Sigmoid colon (tissue), 7 donors: ENCODE measurements at regions of chr6 and their contacts with region 1.

Region 1: DNA sequence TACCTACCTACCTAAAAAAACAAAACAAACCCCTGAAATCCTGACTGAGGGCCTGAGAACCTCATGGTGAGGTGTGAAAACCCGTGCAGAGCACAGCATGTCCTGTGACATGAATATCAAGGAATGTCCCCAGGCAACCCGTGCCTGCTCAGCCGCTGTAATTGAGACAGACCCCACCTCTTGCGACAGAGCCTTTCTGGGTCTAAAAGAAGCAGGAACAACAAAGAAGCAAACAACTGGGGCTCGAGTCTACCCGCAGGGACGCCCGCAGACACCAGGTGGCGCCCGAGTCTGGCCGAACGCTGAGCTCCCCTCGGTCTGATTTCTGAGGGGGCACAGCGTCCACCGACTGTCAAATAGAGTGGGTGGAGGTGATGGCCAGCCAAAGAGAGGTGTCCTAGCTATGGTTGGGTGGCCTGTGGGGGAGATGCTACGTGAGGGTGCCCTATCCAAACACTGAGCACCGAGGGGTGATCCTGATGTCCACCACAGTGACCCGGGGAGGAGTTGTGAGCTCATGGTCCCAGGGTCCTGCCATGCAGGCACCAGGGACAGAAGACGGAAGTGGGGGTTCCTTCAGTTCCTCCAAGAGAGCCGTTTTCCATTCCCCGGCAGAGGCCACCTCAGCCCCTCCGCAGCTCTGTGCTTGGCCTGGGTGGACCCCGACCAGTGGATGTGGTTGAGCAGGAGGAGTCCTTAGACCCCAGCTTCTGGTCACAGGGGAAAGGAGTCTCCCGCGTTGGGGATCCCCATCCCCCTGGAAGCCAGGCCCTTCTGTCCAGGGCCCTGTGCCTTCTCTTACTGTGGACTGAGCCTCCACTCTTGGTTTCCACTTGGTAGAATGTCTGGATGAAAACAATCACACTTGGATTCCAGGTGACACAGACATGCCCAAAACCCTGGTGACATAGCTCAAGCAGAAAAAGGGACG is 268.2 kb downstream of the CDC5L start:
- DNase-seq: peak; percentile 93
- H3K4me3 ChIP-seq: no peak overlapping the region
- H3K27ac ChIP-seq: no peak overlapping the region
- H3K4me1 ChIP-seq: peaks cover 0 to 24% (median 16%) of the 10 kb centered on the region in 4 donors
- H3K27me3 ChIP-seq: no peaks in the 10 kb centered on the region
- CTCF ChIP-seq: peak; percentile 76 to 93 (median 90)
- EP300 ChIP-seq: peak in 2 of 4 donors; percentile 39 to 84
- POLR2A ChIP-seq: no peak

Region 2: DNA sequence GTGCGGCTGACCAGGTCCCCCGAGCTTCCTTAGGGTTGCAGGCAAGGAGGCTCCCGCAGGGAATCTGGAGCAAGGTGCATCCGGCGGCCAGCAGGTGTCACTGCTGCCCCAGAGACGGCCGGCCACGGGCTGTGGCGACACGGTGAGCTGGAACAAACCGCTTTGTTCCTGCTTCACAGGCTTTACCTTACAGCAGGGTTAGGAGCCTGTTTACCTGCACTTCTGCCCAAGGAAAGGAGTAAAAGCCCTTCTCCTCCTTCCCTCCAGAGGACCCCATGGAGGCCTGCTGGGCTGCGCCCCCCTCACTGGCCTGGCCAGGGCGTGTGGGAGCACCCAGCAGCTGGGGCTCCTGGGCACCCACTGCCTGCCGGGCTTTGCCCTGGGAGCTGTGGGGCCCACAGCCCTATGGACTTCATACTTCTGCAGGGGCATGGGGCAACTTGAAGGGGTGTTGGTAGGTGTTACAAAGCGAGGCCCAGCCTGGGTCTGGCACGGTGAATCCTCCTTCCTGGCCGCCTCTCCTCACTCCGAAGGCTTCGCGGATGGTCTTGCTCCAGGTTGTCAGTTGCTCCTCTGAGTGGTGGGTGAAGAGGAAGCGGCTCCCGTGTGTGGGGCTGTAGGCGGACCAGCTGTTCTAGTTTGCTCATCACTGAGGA is 179.8 kb before region 1 on chr6:
- intact Hi-C with region 1: loop called (anchors 5 kb)
- DNase-seq: peak; percentile 88
- H3K4me3 ChIP-seq: no peak overlapping the region
- H3K27ac ChIP-seq: peak overlapping the region in 1 of 4 donors; percentile 25
- H3K4me1 ChIP-seq: peaks cover 0 to 14% (median 8%) of the 10 kb centered on the region in 4 donors
- H3K27me3 ChIP-seq: peaks cover 0 to 12% (median 0%) of the 10 kb centered on the region in 3 donors
- CTCF ChIP-seq: peak; percentile 76 to 92 (median 89)
- EP300 ChIP-seq: no peak
- POLR2A ChIP-seq: no peak

Region 3: GRCh38 chr6:44606504-44606903 is 49.2 kb before region 1 on chr6:
- intact Hi-C with region 1: no loop called
- DNase-seq: no peak
- H3K4me3 ChIP-seq: no peak overlapping the region
- H3K27ac ChIP-seq: no peak overlapping the region
- H3K4me1 ChIP-seq: no peaks in the 10 kb centered on the region
- H3K27me3 ChIP-seq: no peaks in the 10 kb centered on the region
- CTCF ChIP-seq: no peak
- EP300 ChIP-seq: no peak
- POLR2A ChIP-seq: no peak

Region 4: GRCh38 chr6:45377554-45378333 is 722.1 kb after region 1 on chr6 and contains the start of gene SUPT3H:
- intact Hi-C with region 1: loop called (anchors 10 kb)
- DNase-seq: peak; percentile 96
- H3K4me3 ChIP-seq: peak within 1 kb of the TSS; percentile 79 to 90 (median 86)
- H3K27ac ChIP-seq: peak within 1 kb of the TSS; percentile 97
- H3K4me1 ChIP-seq: peaks cover 0 to 17% (median 8%) of the 10 kb centered on the region in 4 donors
- H3K27me3 ChIP-seq: no peaks in the 10 kb centered on the region
- CTCF ChIP-seq: peak in 1 of 4 experiments; percentile 8
- EP300 ChIP-seq: no peak
- POLR2A ChIP-seq: peak; percentile 34 to 61
- total RNA-seq, gene SUPT3H: 10.6 to 18.2 (median 13.0) TPM

Region 5: DNA sequence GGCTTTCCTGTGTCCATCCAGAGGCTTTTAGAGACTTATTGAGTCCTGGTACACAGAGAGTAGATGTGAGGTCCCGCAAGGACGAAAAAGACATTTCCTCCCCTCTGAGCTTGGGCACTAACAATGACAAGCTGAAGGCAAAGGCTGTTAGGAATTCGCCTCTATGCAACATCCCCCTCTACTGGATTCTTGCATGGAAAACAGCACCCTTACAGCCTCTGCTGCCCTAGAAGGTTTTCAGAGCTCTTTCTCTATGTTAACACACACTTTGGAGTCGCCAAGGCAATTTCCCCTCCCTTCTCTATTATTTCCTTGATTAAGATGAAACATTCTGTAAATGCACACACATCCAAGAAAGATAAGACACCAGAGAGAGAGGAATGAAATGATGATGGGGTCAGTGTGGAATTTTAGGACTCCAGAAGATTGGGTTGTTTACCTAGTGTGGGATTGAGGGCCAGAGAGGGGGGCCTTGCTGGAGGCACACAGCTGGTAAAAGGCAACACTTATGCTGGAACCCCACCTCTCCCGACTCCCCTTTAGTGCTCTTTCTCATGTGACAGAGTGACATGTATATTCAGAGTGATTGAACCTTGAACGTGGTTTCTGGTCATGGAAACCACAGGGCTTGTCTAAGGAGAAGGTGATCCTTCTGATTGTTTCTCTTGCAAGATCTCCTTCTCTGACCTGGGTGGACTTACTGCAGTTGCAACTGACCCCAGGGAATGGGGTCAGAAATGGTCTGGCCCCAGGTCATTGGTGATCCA is 1059.2 kb after region 1 on chr6:
- intact Hi-C with region 1: loop called (anchors 5 kb)
- DNase-seq: peak; percentile 77
- H3K4me3 ChIP-seq: no peak overlapping the region
- H3K27ac ChIP-seq: peak overlapping the region in 1 of 4 donors; percentile 5
- H3K4me1 ChIP-seq: peaks cover 0 to 16% (median 10%) of the 10 kb centered on the region in 4 donors
- H3K27me3 ChIP-seq: no peaks in the 10 kb centered on the region
- CTCF ChIP-seq: peak; percentile 75 to 80 (median 78)
- EP300 ChIP-seq: no peak
- POLR2A ChIP-seq: no peak

Region 6: GRCh38 chr6:45922728-45923351 is 1267.2 kb after region 1 on chr6:
- intact Hi-C with region 1: loop called (anchors 2 kb)
- DNase-seq: peak; percentile 87
- H3K4me3 ChIP-seq: no peak overlapping the region
- H3K27ac ChIP-seq: no peak overlapping the region
- H3K4me1 ChIP-seq: no peaks in the 10 kb centered on the region
- H3K27me3 ChIP-seq: no peaks in the 10 kb centered on the region
- CTCF ChIP-seq: peak; percentile 41 to 44 (median 44)
- EP300 ChIP-seq: no peak
- POLR2A ChIP-seq: no peak